ENCODE measurements at regions of chr10 and their contacts with region 1.

Region 1: GRCh38 chr10:93224005-93224779 is 150.5 kb downstream of the CYP26A1 start:
- DNase-seq: no peak
- H3K4me3 ChIP-seq: no peak overlapping the region
- H3K27ac ChIP-seq: no peak overlapping the region
- H3K4me1 ChIP-seq: no peaks in the 10 kb centered on the region
- H3K27me3 ChIP-seq: no peaks in the 10 kb centered on the region
- CTCF ChIP-seq: no peak

Region 2: DNA sequence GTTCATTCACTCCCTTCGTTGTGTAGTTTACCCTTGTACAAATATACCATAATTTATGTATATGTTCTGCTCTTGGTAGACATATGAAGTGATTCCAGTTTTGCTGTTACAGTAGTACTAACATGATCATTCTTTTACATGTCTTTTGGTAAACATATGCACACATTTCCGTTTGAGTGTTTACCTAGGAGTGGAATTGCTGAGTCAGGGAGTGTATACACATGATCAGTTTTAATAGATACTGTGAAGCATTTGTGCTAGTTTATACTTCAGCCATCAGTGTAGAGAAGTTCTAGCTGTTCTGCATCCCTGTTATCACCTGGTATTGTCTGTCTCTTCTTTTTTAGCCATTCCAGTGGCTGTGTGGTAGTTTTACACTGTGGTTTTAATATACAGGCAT is 198.1 kb before region 1 on chr10:
- intact Hi-C with region 1: no loop called
- DNase-seq: no peak
- H3K4me3 ChIP-seq: no peak overlapping the region
- H3K27ac ChIP-seq: no peak overlapping the region
- H3K4me1 ChIP-seq: no peaks in the 10 kb centered on the region
- H3K27me3 ChIP-seq: no peaks in the 10 kb centered on the region
- CTCF ChIP-seq: no peak

Region 3: GRCh38 chr10:93080350-93081046 is 143.7 kb before region 1 on chr10:
- intact Hi-C with region 1: no loop called
- DNase-seq: peak; percentile 49
- H3K4me3 ChIP-seq: no peak overlapping the region
- H3K27ac ChIP-seq: no peak overlapping the region
- H3K4me1 ChIP-seq: no peaks in the 10 kb centered on the region
- H3K27me3 ChIP-seq: peaks cover 13% of the 10 kb centered on the region
- CTCF ChIP-seq: peak; percentile 67

Region 4: GRCh38 chr10:93090619-93091018 is 133.6 kb before region 1 on chr10:
- intact Hi-C with region 1: no loop called
- DNase-seq: no peak
- H3K4me3 ChIP-seq: no peak overlapping the region
- H3K27ac ChIP-seq: no peak overlapping the region
- H3K4me1 ChIP-seq: no peaks in the 10 kb centered on the region
- H3K27me3 ChIP-seq: no peaks in the 10 kb centered on the region
- CTCF ChIP-seq: no peak

Region 5: GRCh38 chr10:93115661-93116383 is 108.4 kb before region 1 on chr10:
- intact Hi-C with region 1: loop called (anchors 10 kb)
- DNase-seq: peak; percentile 86
- H3K4me3 ChIP-seq: no peak overlapping the region
- H3K27ac ChIP-seq: no peak overlapping the region
- H3K4me1 ChIP-seq: no peaks in the 10 kb centered on the region
- H3K27me3 ChIP-seq: no peaks in the 10 kb centered on the region
- CTCF ChIP-seq: peak; percentile 34